T-cell (primary cell): ENCODE measurements at regions of chr2 and their contacts with region 1.

Region 1: DNA sequence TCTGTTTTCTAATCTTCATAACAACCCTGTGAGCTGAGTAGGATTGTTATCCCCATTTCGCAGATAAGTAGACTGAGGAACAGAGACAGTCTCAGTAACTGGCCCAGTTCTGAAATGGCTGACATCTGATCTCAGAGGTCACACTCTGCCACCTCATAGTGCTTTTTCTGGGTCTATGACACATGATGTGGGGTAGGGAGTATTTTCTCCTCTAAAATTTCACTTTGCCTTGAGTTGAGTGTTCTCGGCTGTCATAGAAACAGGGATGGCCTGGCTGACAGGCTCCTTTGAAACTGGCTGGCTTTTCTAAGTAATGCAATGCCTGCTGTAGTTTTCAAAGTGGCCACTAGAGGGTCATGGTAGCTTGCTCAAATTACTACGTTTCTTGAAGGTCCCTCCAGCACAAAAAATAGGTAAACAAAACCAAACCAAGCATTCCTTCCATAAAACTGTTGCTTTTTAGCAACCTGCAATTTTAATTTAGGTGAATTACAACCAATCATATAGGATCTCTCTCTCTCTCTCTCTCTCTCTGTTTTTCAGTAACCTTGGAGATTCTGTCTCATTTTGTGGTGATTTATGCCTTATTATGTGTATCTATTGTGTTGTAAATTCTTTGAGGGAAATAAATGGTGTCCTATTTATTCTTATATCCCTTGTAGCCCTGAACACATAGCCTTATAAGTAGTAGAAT is 84.2 kb upstream of the TTN start:
- DNase-seq: peak in 34 of 35 experiments; percentile 2 to 74 (median 33)
- ATAC-seq: peak; percentile 37 to 67 (median 59)
- H3K4me3 ChIP-seq: no peak overlapping the region
- H3K4me3 Mint-ChIP-seq: no peak overlapping the region
- H3K27ac ChIP-seq: no peak overlapping the region
- H3K27ac Mint-ChIP-seq: no peak overlapping the region
- H3K4me1 ChIP-seq: peaks cover 0 to 2% of the 10 kb centered on the region in 2 experiments
- H3K4me1 Mint-ChIP-seq: peaks cover 0 to 8% (median 8%) of the 10 kb centered on the region in 3 donors
- H3K27me3 ChIP-seq: no peaks in the 10 kb centered on the region
- H3K27me3 Mint-ChIP-seq: no peaks in the 10 kb centered on the region

Region 2: GRCh38 chr2:178404368-178404767 is 487.0 kb before region 1 on chr2:
- CTCF ChIA-PET with region 1: interaction called in 1 of 2 experiments, 10 read pairs
- POLR2A ChIA-PET with region 1: no interaction called
- DNase-seq: no peak
- ATAC-seq: peak in 1 of 4 experiments; percentile 30
- H3K4me3 ChIP-seq: no peak overlapping the region
- H3K4me3 Mint-ChIP-seq: no peak overlapping the region
- H3K27ac ChIP-seq: no peak overlapping the region
- H3K27ac Mint-ChIP-seq: no peak overlapping the region
- H3K4me1 ChIP-seq: peaks cover 0 to 3% of the 10 kb centered on the region in 2 experiments
- H3K4me1 Mint-ChIP-seq: peaks cover 0 to 7% (median 6%) of the 10 kb centered on the region in 3 donors
- H3K27me3 ChIP-seq: no peaks in the 10 kb centered on the region
- H3K27me3 Mint-ChIP-seq: peaks cover 5 to 6% of the 10 kb centered on the region in 2 donors